CD8-positive, alpha-beta T cell (primary cell): ENCODE measurements at regions of chr12 and their contacts with region 1.

Region 1: GRCh38 chr12:79737875-79738718 is 47.3 kb upstream of the PAWR start:
- DNase-seq: peak in 3 of 9 experiments; percentile 4 to 53 (median 33)
- ATAC-seq: no peak
- H3K4me3 ChIP-seq: no peak overlapping the region
- H3K4me3 Mint-ChIP-seq: no peak overlapping the region
- H3K27ac ChIP-seq: no peak overlapping the region
- H3K27ac Mint-ChIP-seq: no peak overlapping the region
- H3K4me1 ChIP-seq: no peaks in the 10 kb centered on the region
- H3K4me1 Mint-ChIP-seq: no peaks in the 10 kb centered on the region
- H3K27me3 ChIP-seq: no peaks in the 10 kb centered on the region
- H3K27me3 Mint-ChIP-seq: peaks cover 13% of the 10 kb centered on the region
- CTCF ChIP-seq: peak; percentile 48

Region 2: DNA sequence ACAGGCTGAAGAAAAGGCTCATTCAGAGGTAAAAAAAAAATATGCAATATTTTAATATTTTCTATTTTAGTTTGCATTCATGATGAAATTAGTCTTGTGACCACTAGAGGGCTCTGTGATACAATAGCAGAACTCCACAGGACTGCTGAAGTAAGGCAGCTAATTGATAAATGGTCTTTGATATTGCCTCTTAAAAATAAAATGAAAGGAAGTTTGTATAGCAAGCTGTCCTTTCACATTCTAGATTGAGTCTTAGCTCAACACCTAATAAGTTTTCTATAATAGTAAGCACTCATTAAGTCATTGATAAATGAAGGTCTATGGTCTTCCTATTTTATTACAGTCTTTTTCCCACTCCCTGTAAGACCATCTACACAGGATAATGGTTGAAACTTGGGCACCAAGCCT is 1591.7 kb before region 1 on chr12:
- CTCF ChIA-PET with region 1: no interaction called
- POLR2A ChIA-PET with region 1: no interaction called
- intact Hi-C with region 1: loop called in 1 of 2 experiments (anchors 10 kb)
- DNase-seq: peak in 1 of 9 experiments; percentile 14
- ATAC-seq: no peak
- H3K4me3 ChIP-seq: no peak overlapping the region
- H3K4me3 Mint-ChIP-seq: no peak overlapping the region
- H3K27ac ChIP-seq: no peak overlapping the region
- H3K27ac Mint-ChIP-seq: no peak overlapping the region
- H3K4me1 ChIP-seq: no peaks in the 10 kb centered on the region
- H3K4me1 Mint-ChIP-seq: no peaks in the 10 kb centered on the region
- H3K27me3 ChIP-seq: no peaks in the 10 kb centered on the region
- H3K27me3 Mint-ChIP-seq: no peaks in the 10 kb centered on the region
- CTCF ChIP-seq: peak; percentile 54

Region 3: DNA sequence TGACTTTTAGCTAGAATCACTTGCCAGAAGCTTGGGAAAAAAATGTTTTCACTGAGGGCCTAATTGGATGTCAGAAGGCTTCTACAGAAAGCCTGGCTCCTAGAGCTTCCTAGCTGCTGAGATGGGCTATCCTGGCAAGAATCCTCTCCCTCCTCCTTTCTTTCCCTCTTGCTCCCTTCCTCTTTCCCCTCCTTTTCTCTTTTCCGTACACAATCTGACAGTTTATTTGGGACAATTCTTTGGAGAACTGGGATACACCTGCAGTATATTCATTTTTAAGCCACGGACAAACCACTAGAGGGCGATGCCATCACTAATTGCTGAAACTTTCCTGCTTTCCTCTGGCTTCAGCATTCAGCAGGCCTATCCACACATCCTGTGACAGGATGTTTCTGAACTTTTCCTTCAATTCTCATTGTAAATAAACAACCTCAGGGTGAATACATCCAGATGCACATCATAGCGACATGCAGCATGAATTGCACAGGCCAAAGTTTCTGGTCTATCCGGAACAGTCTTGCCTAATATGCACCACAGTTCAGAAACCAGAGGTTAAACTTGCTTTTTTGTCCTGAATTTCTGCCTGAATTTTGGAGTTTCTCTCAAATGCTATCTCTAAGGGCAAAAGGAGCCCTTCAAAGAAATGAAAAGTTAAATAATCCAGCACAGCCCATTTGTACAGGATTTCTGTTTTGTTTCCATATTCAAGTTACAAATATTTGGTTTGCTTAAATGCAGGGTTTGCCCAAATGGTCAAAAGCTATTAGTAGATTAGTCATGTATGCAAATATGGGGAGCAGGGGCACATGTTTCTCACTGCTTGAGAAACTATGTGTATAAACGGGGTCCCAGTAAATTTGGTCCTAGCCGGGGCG is 190.1 kb before region 1 on chr12:
- CTCF ChIA-PET with region 1: no interaction called
- POLR2A ChIA-PET with region 1: no interaction called
- intact Hi-C with region 1: loop called (anchors 5 kb)
- DNase-seq: peak in 2 of 9 experiments; percentile 7 to 28
- ATAC-seq: no peak
- H3K4me3 ChIP-seq: no peak overlapping the region
- H3K4me3 Mint-ChIP-seq: no peak overlapping the region
- H3K27ac ChIP-seq: no peak overlapping the region
- H3K27ac Mint-ChIP-seq: no peak overlapping the region
- H3K4me1 ChIP-seq: no peaks in the 10 kb centered on the region
- H3K4me1 Mint-ChIP-seq: no peaks in the 10 kb centered on the region
- H3K27me3 ChIP-seq: no peaks in the 10 kb centered on the region
- H3K27me3 Mint-ChIP-seq: no peaks in the 10 kb centered on the region
- CTCF ChIP-seq: peak; percentile 20

Region 4: DNA sequence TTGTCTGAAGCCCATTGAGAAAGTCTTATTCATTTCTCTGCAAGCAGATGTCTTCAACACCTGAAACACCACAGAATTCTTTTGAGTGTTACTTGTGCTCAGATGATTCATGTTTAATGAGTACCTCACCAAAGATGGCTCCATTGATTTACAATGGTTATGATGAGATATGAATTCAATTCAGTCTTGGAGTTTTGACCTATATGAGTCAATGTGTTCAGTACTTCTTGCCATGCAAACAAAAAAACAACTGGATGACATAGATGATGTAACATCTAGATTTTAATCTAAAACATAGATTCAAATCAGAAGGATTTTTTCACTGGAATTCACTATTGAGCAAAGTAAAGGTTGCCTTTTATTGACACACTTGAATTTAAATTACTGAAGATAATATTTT is 31.9 kb before region 1 on chr12:
- CTCF ChIA-PET with region 1: no interaction called
- POLR2A ChIA-PET with region 1: no interaction called
- intact Hi-C with region 1: no loop called
- DNase-seq: no peak
- ATAC-seq: no peak
- H3K4me3 ChIP-seq: no peak overlapping the region
- H3K4me3 Mint-ChIP-seq: no peak overlapping the region
- H3K27ac ChIP-seq: no peak overlapping the region
- H3K27ac Mint-ChIP-seq: no peak overlapping the region
- H3K4me1 ChIP-seq: no peaks in the 10 kb centered on the region
- H3K4me1 Mint-ChIP-seq: no peaks in the 10 kb centered on the region
- H3K27me3 ChIP-seq: no peaks in the 10 kb centered on the region
- H3K27me3 Mint-ChIP-seq: peaks cover 8% of the 10 kb centered on the region
- CTCF ChIP-seq: no peak

Region 5: DNA sequence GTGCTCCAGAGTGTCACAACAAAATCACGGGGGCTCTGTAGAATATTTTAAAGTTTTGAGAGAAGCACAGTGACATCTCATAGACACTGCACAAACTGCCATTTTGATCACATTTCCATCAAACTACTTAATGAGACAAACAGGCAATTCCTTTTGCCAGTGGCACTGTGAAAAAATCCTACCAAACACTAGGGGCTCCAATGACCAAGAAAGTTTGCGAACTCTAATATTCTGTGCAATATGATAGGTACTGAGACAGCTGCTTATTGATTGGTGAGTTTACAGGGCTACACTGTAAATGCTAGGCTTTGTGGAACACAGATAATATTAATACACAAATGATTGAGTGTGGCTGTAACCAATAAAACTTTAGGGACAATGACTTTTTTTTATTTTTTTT is 73.3 kb after region 1 on chr12:
- CTCF ChIA-PET with region 1: no interaction called
- POLR2A ChIA-PET with region 1: no interaction called
- intact Hi-C with region 1: no loop called
- DNase-seq: no peak
- ATAC-seq: no peak
- H3K4me3 ChIP-seq: no peak overlapping the region
- H3K4me3 Mint-ChIP-seq: no peak overlapping the region
- H3K27ac ChIP-seq: no peak overlapping the region
- H3K27ac Mint-ChIP-seq: no peak overlapping the region
- H3K4me1 ChIP-seq: no peaks in the 10 kb centered on the region
- H3K4me1 Mint-ChIP-seq: peaks cover 2% of the 10 kb centered on the region
- H3K27me3 ChIP-seq: no peaks in the 10 kb centered on the region
- H3K27me3 Mint-ChIP-seq: no peaks in the 10 kb centered on the region
- CTCF ChIP-seq: no peak